Calu3 (cell line): ENCODE measurements at regions of chr3 and their contacts with region 1.

Region 1: GRCh38 chr3:27387625-27388024 is 18.4 kb upstream of the NEK10 start:
- DNase-seq: no peak
- H3K4me3 Mint-ChIP-seq: no peak overlapping the region
- H3K27ac Mint-ChIP-seq: no peak overlapping the region
- H3K4me1 Mint-ChIP-seq: peaks cover 7% of the 10 kb centered on the region
- H3K27me3 Mint-ChIP-seq: no peaks in the 10 kb centered on the region
- CTCF ChIP-seq: no peak

Region 2: DNA sequence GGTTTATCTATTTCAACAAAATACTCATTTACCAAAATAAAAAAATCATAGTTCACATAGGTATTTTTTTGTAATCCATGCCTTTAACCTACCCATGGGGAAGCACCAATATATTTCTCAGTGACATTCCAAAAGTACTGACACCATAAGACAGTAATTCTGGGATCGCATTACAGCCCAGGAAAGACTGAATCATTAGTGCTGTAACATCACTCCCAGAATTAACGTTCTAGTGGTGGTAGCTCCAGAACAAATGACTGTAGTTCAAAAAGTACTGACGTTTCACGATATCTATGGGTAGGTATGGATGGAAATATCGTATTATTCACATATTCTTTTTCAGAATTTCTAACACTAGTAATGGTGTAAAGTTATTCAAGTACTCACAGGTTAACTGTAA is 35.8 kb after region 1 on chr3:
- CTCF ChIA-PET with region 1: no interaction called
- intact Hi-C with region 1: loop called (anchors 5 kb)
- DNase-seq: no peak
- H3K4me3 Mint-ChIP-seq: no peak overlapping the region
- H3K27ac Mint-ChIP-seq: no peak overlapping the region
- H3K4me1 Mint-ChIP-seq: no peaks in the 10 kb centered on the region
- H3K27me3 Mint-ChIP-seq: no peaks in the 10 kb centered on the region
- CTCF ChIP-seq: no peak

Region 3: DNA sequence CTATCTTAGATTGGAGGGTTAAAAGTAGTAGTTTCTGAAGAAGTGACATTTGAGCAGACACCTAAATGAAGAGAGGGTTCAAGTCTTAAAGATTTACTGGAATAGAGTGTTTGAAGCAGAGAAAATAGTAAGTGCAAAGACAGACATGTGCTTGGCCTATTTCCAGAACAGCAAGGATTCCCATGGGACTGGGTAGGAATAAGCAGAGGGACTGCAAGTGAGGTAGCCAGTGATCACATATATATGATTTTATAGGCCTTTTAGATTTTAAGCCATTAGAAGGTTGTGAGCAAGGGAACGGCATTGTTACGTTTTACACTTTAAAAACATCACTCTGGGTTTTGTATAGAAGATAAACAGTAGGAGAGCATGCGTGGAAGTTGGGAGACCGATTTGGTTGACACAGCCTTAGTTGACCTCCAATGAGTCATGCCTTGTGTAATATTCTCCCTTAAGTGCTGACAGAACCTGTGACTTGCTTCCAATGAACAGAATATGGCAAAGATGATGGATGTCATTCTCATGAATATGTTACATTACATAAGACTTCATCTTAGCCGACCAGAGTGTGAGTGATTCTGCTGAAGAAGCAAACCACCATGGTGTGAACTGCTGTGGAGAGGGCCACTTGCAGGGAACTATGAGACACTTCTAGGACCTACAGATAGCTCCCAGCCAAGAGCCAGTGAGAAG is 133.7 kb after region 1 on chr3:
- CTCF ChIA-PET with region 1: no interaction called
- intact Hi-C with region 1: no loop called
- DNase-seq: peak; percentile 25
- H3K4me3 Mint-ChIP-seq: no peak overlapping the region
- H3K27ac Mint-ChIP-seq: no peak overlapping the region
- H3K4me1 Mint-ChIP-seq: peaks cover 35% of the 10 kb centered on the region
- H3K27me3 Mint-ChIP-seq: no peaks in the 10 kb centered on the region
- CTCF ChIP-seq: no peak